Mammary epithelial cell (primary cell): ENCODE measurements at regions of chr9 and their contacts with region 1.

Region 1: DNA sequence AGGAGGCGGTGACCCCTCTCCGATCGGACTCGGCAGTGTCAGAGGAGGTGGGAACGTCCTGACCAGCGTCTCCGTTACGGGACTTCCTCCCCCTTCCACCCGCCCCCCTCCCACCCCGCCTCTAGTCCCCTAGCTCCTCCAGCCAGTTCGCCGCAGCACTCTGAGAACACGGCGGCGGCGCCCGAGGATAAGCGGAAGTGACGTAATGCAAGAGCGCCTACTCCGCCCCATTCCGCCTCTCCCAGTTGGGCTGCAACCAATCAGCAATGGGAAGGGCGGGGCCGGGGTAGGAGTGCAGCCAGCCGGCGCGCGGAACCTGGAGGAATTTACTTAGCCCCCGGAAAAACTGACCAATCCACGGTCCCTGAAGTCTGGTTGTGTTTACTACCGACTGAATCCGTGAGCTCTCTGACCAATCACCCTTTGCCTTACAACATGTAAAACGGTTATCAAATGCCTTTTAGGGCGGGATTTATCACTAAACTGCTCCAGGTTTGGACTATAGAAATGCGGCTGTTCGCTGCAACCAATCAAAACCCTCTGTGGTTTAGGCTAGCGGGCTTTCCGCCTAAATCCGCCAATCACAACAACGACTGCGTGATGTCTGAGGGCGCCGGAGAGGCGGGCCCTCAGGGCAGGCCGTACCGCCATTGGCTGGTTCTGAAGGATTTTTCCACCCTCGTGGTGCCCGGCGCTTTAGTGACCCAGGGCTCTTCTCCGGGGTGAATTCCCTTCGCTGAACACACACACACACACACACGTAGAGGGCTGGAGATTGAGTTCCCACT is at the start of gene ZBTB5:
- DNase-seq: peak; percentile 100
- H3K4me3 ChIP-seq: peak within 1 kb of the TSS; percentile 85 to 100 (median 96)
- H3K27ac ChIP-seq: peak within 1 kb of the TSS; percentile 91
- H3K4me1 ChIP-seq: peaks cover 23% of the 10 kb centered on the region
- H3K27me3 ChIP-seq: no peaks in the 10 kb centered on the region
- CTCF ChIP-seq: no peak
- total RNA-seq, gene ZBTB5: 7.6 to 20.5 TPM

Region 2: GRCh38 chr9:37309136-37309535 is 156.3 kb before region 1 on chr9:
- CTCF ChIA-PET with region 1: no interaction called
- dilution Hi-C with region 1: no loop called
- in situ Hi-C with region 1: no loop called
- intact Hi-C with region 1: no loop called
- DNase-seq: peak; percentile 5
- H3K4me3 ChIP-seq: no peak overlapping the region
- H3K27ac ChIP-seq: no peak overlapping the region
- H3K4me1 ChIP-seq: no peaks in the 10 kb centered on the region
- H3K27me3 ChIP-seq: no peaks in the 10 kb centered on the region
- CTCF ChIP-seq: peak; percentile 16 to 44

Region 3: DNA sequence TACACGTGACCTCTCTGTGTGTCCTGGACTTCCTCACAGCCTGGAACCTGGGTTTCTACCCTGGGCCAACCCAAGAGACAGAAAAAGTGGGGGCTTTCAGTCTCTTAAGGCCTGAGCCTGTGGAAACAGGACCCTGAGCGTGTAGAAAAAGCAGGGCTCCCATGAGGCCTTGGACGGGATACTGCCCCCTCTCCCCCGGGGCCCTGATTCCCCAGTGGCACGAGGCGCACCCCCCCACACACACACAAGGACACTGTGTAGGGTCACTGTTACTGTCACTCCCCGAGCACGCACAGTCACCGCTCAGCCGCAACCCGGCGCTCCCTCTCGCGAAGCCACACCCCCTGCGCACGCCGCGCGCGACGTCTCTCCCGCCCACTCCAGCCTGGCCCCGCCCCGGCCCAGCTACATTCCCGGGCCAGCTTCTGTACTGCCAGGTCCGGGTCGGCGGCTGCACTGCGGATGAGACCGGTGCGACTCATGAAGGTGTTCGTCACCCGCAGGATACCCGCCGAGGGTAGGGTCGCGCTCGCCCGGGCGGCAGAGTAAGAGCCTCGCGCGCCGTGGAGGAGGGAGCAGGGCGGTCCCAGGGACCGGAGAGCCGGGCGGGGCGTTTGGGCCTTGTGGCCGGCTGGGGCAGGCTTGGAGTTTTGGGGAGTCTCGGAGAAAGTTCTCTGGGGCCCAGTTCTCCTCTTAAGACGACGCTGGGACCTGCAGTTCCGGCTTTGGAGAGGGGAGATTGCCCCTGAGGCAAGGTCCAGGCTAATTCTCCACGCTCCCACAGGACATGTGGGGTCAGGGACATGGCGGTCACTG is 42.9 kb before region 1 on chr9 and contains the start of gene GRHPR:
- CTCF ChIA-PET with region 1: no interaction called
- dilution Hi-C with region 1: no loop called
- in situ Hi-C with region 1: no loop called
- intact Hi-C with region 1: no loop called
- DNase-seq: peak; percentile 77
- H3K4me3 ChIP-seq: peak within 1 kb of the TSS; percentile 77 to 95 (median 93)
- H3K27ac ChIP-seq: peak within 1 kb of the TSS; percentile 87
- H3K4me1 ChIP-seq: peaks cover 27% of the 10 kb centered on the region
- H3K27me3 ChIP-seq: no peaks in the 10 kb centered on the region
- CTCF ChIP-seq: no peak
- total RNA-seq, gene GRHPR: 87.0 to 163 TPM

Region 4: DNA sequence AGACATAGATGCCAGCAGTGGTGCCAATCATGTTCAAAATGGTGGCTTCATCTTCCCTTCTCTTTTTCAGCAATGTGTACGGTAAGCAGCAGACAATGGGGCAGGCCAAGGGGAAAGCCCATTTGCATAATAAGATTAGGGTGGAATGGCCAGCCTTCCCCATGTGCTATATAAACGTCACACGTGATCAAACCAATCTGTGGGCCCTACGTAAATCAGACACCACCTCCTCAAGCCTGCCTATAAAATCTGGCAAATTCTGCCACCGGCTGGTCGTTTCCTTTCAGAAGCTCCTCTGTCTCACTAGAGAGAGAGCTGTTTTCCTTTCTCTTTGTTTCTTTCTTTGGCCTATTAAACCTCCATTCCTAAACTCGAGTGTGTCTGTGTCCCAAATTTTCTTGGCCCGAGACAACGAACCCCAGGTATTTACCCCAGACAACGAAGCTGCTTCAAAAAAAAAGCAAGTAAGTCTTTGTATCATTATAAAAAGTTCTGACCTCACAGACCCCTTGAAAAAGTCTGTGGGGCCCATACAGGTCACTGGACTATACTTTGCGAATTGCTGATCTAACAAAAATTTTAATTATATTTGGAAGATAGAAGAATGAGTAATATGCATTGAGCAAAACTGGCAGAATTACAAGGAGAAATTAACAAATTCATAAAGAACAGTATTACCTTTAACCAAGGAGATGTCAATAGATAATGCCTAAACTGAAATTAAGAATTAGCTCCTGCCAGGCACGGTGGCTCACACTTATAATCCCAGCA is 15.4 kb before region 1 on chr9:
- CTCF ChIA-PET with region 1: no interaction called
- dilution Hi-C with region 1: no loop called
- in situ Hi-C with region 1: no loop called
- intact Hi-C with region 1: loop called (anchors 1 kb)
- DNase-seq: no peak
- H3K4me3 ChIP-seq: no peak overlapping the region
- H3K27ac ChIP-seq: no peak overlapping the region
- H3K4me1 ChIP-seq: peaks cover 21% of the 10 kb centered on the region
- H3K27me3 ChIP-seq: no peaks in the 10 kb centered on the region
- CTCF ChIP-seq: no peak

Region 5: DNA sequence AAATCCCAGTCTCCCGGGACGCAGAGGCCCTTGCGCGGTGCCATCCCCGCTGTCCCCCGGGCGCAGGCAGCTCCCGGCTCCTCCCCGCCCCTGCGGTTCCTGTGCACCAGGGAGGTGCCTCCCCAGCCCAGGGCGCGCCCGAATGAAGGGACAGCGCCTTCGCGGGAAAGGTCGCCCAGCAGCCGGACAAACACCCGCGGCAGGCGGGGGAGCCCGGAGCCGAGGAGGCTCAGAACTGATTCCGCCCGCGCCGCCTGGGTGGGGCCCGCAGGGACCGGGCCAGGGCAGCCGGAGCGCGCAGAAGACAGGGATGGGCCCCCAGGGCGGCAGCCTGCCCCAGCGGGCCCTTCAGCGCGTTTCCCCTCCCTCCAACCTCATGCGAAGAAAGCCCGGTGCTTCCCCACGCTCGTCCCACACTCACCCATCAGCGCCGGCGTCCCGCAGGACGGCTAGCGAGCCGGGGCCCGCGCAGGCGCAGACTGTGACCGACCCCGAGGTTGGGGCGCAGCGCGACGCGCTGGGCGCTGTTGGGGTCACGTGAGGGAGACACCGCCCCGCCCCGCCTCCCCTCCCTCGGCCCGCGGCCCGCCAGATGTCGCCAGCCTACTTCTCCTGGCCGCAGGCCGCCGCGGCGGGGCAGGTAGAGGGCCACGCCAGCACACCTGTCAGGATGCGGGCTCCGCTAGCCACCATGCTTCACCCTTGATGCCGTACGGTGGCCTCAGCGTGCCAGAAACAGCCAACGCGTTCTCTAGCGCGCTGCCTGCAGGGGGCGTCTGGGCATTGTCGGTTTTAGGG is 438.4 kb after region 1 on chr9 and contains the start of gene SLC25A51:
- CTCF ChIA-PET with region 1: no interaction called
- dilution Hi-C with region 1: no loop called
- in situ Hi-C with region 1: no loop called
- intact Hi-C with region 1: no loop called
- DNase-seq: peak; percentile 94
- H3K4me3 ChIP-seq: peak within 1 kb of the TSS; percentile 60 to 83 (median 78)
- H3K27ac ChIP-seq: peak within 1 kb of the TSS; percentile 67
- H3K4me1 ChIP-seq: peaks cover 25% of the 10 kb centered on the region
- H3K27me3 ChIP-seq: no peaks in the 10 kb centered on the region
- CTCF ChIP-seq: peak; percentile 92 to 98
- total RNA-seq, gene SLC25A51: 30.0 to 78.0 TPM